ENCODE measurements at regions of chr17 and their contacts with region 1.

Region 1: DNA sequence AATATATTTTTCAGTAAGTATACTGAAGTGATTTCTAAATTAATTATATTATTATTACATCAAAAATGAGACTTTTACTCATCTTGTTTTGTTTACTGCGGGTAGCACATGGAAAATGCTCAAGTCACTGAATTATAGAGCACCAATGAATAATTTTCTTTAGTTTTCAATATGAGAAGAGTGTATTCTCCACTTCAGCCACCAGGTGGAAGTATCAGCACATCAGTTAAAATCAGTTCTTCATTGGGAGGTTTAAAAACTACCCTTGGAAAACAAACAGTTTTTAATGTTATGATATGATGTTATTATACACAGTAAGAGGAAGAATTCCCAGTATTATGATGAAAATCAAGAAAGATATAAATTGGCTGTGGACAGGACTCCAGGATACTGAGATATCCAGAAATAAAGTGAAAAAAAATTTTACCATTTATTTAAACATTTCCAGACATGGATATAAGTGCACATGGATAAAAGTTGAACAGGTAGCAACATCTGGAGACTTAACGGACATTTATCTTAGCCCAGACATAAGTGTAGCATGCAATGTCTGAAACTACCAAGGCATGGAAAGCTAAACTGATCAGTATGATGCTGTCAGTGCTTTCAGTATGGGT is 467.3 kb downstream of the KCNJ2 start:
- DNase-seq: no peak
- H3K4me3 ChIP-seq: no peak overlapping the region
- H3K27ac ChIP-seq: no peak overlapping the region
- H3K4me1 ChIP-seq: no peaks in the 10 kb centered on the region
- H3K27me3 ChIP-seq: peaks cover 0 to 3% of the 10 kb centered on the region in 2 donors
- CTCF ChIP-seq: peak; percentile 56 to 73

Region 2: DNA sequence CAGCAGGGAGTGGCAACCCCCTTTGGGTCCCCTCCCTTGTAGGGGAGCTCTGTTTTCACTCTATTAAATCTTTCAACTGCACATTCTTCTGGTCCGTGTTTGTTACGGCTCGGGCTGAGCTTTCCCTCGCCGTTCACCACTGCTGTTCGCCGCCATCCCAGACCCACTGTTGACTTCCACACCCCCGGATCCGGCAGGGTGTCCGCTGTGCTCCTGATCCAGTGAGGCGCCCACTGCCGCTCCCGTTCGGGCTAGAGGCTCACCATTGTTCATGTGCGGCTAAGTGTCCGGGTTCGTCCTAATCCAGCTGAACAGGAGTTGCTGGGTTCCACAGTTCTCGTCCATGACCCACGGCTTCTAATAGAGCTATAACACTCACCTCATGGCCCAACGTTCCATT is 59.2 kb before region 1 on chr17:
- intact Hi-C with region 1: no loop called
- DNase-seq: no peak
- H3K4me3 ChIP-seq: no peak overlapping the region
- H3K27ac ChIP-seq: no peak overlapping the region
- H3K4me1 ChIP-seq: no peaks in the 10 kb centered on the region
- H3K27me3 ChIP-seq: no peaks in the 10 kb centered on the region
- CTCF ChIP-seq: no peak

Region 3: GRCh38 chr17:72539981-72540897 is 1903.6 kb after region 1 on chr17:
- intact Hi-C with region 1: loop called (anchors 10 kb)
- DNase-seq: peak; percentile 36 to 80
- H3K4me3 ChIP-seq: peak overlapping the region in 1 of 2 donors; percentile 31
- H3K27ac ChIP-seq: no peak overlapping the region
- H3K4me1 ChIP-seq: peaks cover 0 to 12% (median 3%) of the 10 kb centered on the region in 4 donors
- H3K27me3 ChIP-seq: peaks cover 0 to 9% of the 10 kb centered on the region in 2 donors
- CTCF ChIP-seq: peak; percentile 88 to 99

Measured in tibial artery (tissue), 4 donors.